Prostate gland (tissue), 2 donors: ENCODE measurements at regions of chr22 and their contacts with region 1.

Region 1: GRCh38 chr22:37316875-37317371 is 34.6 kb downstream of the CYTH4 start:
- DNase-seq: peak; percentile 79
- H3K4me3 ChIP-seq: no peak overlapping the region
- H3K27ac ChIP-seq: no peak overlapping the region
- H3K4me1 ChIP-seq: no peaks in the 10 kb centered on the region
- H3K27me3 ChIP-seq: no peaks in the 10 kb centered on the region
- CTCF ChIP-seq: peak; percentile 61 to 94 (median 89)
- POLR2A ChIP-seq: no peak

Region 2: GRCh38 chr22:37428649-37429586 is 112.0 kb after region 1 on chr22:
- intact Hi-C with region 1: loop called (anchors 5 kb)
- DNase-seq: peak; percentile 29
- H3K4me3 ChIP-seq: no peak overlapping the region
- H3K27ac ChIP-seq: no peak overlapping the region
- H3K4me1 ChIP-seq: no peaks in the 10 kb centered on the region
- H3K27me3 ChIP-seq: peaks cover 9% of the 10 kb centered on the region
- CTCF ChIP-seq: peak; percentile 44 to 69 (median 68)
- POLR2A ChIP-seq: no peak

Region 3: DNA sequence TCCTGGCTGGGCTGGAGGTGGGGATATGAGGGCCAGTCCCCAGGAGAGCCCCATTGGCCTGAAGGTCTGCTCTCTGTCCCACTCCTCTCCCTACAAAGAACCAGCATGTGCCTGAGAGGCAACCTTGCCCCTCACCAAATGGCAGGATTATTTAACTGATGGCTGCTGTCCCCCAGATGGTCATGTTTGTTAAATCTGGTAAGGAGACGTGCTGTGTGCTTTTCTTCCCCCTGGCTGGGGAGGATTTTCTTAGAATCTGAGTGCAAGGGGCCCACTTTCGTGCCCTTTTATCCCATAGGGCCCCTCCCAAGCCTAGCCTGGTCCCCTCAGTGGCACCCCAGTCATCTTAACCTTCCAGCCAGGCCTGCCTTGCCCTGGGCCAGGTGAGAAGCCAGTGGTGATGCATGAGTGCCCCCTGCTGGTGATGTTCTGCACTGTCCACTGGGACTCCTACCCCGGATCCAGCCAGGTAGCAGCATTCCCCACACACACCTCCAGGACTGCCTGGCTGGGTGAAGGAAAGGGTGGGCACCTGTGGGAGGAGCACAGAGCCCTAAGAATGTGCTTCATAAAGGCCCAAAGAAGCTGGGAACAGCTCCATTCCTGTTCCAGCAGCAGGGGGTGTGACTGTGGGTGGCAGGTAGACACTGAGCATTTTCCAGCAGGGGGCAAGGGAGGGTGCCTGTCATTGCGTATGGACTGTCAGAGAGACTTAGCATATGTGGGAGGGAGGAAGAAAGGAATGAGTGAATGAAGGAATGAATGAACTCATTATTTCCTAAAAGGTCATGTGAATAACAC is 140.4 kb after region 1 on chr22:
- intact Hi-C with region 1: loop called (anchors 5 kb)
- DNase-seq: peak; percentile 69
- H3K4me3 ChIP-seq: no peak overlapping the region
- H3K27ac ChIP-seq: no peak overlapping the region
- H3K4me1 ChIP-seq: no peaks in the 10 kb centered on the region
- H3K27me3 ChIP-seq: no peaks in the 10 kb centered on the region
- CTCF ChIP-seq: peak; percentile 81 to 94 (median 86)
- POLR2A ChIP-seq: no peak

Region 4: GRCh38 chr22:37566903-37567820 is 250.2 kb after region 1 on chr22:
- intact Hi-C with region 1: loop called (anchors 5 kb)
- DNase-seq: peak; percentile 90
- H3K4me3 ChIP-seq: no peak overlapping the region
- H3K27ac ChIP-seq: peak overlapping the region; percentile 38 to 42
- H3K4me1 ChIP-seq: peaks cover 18% of the 10 kb centered on the region
- H3K27me3 ChIP-seq: no peaks in the 10 kb centered on the region
- CTCF ChIP-seq: peak; percentile 92 to 99 (median 98)
- POLR2A ChIP-seq: no peak